ENCODE measurements at regions of chr11 and their contacts with region 1.

Region 1: DNA sequence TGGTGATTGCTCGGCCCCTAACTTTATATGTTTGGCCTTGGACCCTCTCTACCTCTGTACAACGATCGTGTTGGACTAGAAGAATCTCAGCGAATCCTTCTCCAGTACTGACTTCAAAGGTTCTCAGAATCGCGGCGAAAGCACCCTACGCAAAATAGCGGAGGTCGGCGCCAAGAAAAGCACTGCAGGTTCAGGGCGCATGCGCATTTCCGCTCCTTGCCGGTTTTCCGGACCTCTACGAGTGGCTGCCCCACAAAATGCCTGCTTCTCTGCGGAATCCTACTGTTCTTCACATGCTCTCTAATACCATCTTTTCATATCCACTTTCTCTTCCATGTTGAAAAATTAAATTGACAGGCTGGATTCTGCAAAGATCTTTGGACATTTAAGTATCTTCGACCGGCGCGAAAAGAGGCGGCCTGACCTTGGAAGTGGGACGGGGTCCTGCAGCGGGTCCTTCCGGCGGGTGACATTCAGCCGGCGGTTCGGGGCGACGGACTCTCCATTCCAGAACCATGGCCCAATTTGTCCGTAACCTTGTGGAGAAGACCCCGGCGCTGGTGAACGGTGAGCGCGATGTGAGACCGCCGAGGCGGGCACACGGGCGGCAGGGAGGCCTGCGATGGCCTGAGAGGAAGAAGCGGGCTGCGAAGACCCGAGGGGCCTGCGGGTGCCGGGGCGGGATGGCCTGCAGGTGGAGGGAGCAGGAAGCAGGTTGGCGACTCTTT is at the start of gene ATP5MG:
- DNase-seq: peak; percentile 79
- H3K4me3 ChIP-seq: peak within 1 kb of the TSS; percentile 62 to 98 (median 90)
- H3K27ac ChIP-seq: peak within 1 kb of the TSS; percentile 83
- H3K4me1 ChIP-seq: peaks cover 9% of the 10 kb centered on the region
- H3K27me3 ChIP-seq: no peaks in the 10 kb centered on the region
- CTCF ChIP-seq: peak in 1 of 2 donors; percentile 21
- total RNA-seq, gene ATP5MG: 24.8 to 187 TPM

Region 2: DNA sequence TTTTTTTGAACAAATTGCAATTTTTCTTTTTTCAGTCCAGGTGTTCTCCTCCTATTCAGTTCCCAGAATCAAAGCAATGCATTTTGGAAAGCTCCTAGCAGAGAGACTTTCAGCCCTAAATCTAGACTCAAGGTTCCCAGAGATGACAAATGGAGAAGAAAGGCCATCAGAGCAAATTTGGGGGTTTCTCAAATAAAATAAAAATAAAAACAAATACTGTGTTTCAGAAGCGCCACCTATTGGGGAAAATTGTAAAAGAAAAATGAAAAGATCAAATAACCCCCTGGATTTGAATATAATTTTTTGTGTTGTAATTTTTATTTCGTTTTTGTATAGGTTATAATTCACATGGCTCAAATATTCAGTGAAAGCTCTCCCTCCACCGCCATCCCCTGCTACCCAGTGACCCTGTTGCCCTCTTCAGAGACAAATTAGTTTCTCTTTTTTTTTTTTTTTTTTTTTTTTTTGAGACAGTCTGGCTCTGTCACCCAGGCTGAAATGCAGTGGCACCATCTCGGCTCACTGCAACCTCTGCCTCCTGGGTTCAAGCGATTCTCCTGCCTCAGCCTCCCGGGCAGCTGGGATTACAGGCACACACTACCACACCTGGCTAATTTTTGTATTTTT is 48.1 kb before region 1 on chr11:
- CTCF ChIA-PET with region 1: no interaction called
- dilution Hi-C with region 1: no loop called
- in situ Hi-C with region 1: no loop called
- intact Hi-C with region 1: no loop called
- DNase-seq: no peak
- H3K4me3 ChIP-seq: no peak overlapping the region
- H3K27ac ChIP-seq: no peak overlapping the region
- H3K4me1 ChIP-seq: no peaks in the 10 kb centered on the region
- H3K27me3 ChIP-seq: no peaks in the 10 kb centered on the region
- CTCF ChIP-seq: peak; percentile 17 to 50

Region 3: GRCh38 chr11:118364956-118365615 is 36.2 kb before region 1 on chr11:
- CTCF ChIA-PET with region 1: no interaction called
- dilution Hi-C with region 1: loop called (anchors 5 kb)
- in situ Hi-C with region 1: no loop called
- intact Hi-C with region 1: no loop called
- DNase-seq: no peak
- H3K4me3 ChIP-seq: no peak overlapping the region
- H3K27ac ChIP-seq: no peak overlapping the region
- H3K4me1 ChIP-seq: peaks cover 8% of the 10 kb centered on the region
- H3K27me3 ChIP-seq: no peaks in the 10 kb centered on the region
- CTCF ChIP-seq: no peak

Region 4: DNA sequence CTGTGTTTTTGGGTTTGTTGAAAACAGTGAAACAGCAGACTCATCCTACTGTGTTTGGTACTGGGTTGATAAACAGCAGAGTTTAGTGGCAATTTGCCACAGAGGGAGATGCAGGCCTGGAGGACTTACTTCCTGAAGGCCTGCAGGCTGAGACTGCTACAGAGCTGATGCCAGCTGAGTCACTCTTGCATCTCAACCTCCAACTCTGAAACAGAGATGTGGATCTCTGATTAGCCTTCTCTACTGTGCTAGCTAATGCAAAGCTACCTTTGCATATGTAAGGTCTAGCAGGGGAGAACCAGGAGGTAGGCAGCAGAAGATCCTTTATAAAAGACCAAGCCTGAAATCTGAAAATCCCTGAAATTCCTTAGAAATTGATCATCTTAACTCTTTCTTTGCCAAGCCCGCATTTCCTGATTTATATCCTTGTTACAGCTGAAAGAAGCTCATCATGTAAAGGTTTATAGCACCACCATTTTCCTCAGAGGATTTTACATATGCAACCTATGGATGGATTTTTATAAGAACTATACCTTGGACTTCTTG is 14.5 kb after region 1 on chr11:
- CTCF ChIA-PET with region 1: no interaction called
- dilution Hi-C with region 1: no loop called
- in situ Hi-C with region 1: no loop called
- intact Hi-C with region 1: loop called (anchors 1 kb)
- DNase-seq: peak; percentile 85
- H3K4me3 ChIP-seq: no peak overlapping the region
- H3K27ac ChIP-seq: no peak overlapping the region
- H3K4me1 ChIP-seq: peaks cover 17% of the 10 kb centered on the region
- H3K27me3 ChIP-seq: no peaks in the 10 kb centered on the region
- CTCF ChIP-seq: no peak

Region 5: GRCh38 chr11:118435893-118436624 is 34.7 kb after region 1 on chr11 and contains the start of gene KMT2A:
- CTCF ChIA-PET with region 1: no interaction called
- dilution Hi-C with region 1: no loop called
- in situ Hi-C with region 1: no loop called
- intact Hi-C with region 1: loop called (anchors 1 kb)
- DNase-seq: peak; percentile 99
- H3K4me3 ChIP-seq: peak within 1 kb of the TSS; percentile 84 to 95 (median 88)
- H3K27ac ChIP-seq: peak within 1 kb of the TSS; percentile 42
- H3K4me1 ChIP-seq: peaks cover 25% of the 10 kb centered on the region
- H3K27me3 ChIP-seq: no peaks in the 10 kb centered on the region
- CTCF ChIP-seq: no peak
- total RNA-seq, gene KMT2A: 35.7 to 55.2 TPM

Region 6: DNA sequence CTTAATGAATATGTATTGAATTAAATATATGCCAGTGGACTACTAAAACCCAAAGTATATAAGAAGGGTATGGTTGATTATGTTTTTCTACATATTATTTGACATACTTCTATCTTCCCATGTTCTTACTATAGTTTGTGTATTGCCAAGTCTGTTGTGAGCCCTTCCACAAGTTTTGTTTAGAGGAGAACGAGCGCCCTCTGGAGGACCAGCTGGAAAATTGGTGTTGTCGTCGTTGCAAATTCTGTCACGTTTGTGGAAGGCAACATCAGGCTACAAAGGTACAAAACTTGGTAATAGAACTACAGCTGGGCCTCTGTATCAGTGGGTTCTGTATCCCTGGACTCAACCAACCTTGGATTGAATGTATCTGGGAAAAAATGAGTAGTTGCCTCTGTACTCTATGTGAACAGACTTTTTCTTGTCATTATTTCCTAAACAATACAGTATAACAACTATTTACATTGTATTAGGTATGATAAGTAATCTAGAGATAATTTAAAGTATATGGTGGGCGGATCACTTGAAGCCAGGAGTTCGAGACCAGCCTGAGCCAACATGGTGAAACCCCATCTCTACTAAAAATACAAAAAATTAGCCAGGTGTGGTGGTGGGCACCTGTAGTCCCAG is 87.3 kb after region 1 on chr11:
- CTCF ChIA-PET with region 1: no interaction called
- dilution Hi-C with region 1: no loop called
- in situ Hi-C with region 1: loop called (anchors 10 to 25 kb)
- intact Hi-C with region 1: loop called (anchors 1 kb)
- DNase-seq: peak; percentile 47
- H3K4me3 ChIP-seq: no peak overlapping the region
- H3K27ac ChIP-seq: no peak overlapping the region
- H3K4me1 ChIP-seq: no peaks in the 10 kb centered on the region
- H3K27me3 ChIP-seq: no peaks in the 10 kb centered on the region
- CTCF ChIP-seq: peak; percentile 83 to 91

Region 7: GRCh38 chr11:118497831-118498230 is 96.5 kb after region 1 on chr11:
- CTCF ChIA-PET with region 1: no interaction called
- dilution Hi-C with region 1: no loop called
- in situ Hi-C with region 1: loop called (anchors 10 to 25 kb)
- intact Hi-C with region 1: no loop called
- DNase-seq: no peak
- H3K4me3 ChIP-seq: no peak overlapping the region
- H3K27ac ChIP-seq: no peak overlapping the region
- H3K4me1 ChIP-seq: no peaks in the 10 kb centered on the region
- H3K27me3 ChIP-seq: no peaks in the 10 kb centered on the region
- CTCF ChIP-seq: no peak